ENCODE measurements at regions of chr12 and their contacts with region 1.

Region 1: GRCh38 chr12:69070319-69071090 is 137.5 kb upstream of the CPM start:
- DNase-seq: peak; percentile 71
- ATAC-seq: peak; percentile 78
- H3K4me3 ChIP-seq: no peak overlapping the region
- H3K4me3 Mint-ChIP-seq: no peak overlapping the region
- H3K27ac ChIP-seq: no peak overlapping the region
- H3K27ac Mint-ChIP-seq: no peak overlapping the region
- H3K4me1 ChIP-seq: no peaks in the 10 kb centered on the region
- H3K4me1 Mint-ChIP-seq: no peaks in the 10 kb centered on the region
- H3K27me3 ChIP-seq: peaks cover 0 to 3% (median 0%) of the 10 kb centered on the region in 4 experiments
- H3K27me3 Mint-ChIP-seq: peaks cover 23% of the 10 kb centered on the region
- CTCF ChIP-seq: peak; percentile 87

Region 2: DNA sequence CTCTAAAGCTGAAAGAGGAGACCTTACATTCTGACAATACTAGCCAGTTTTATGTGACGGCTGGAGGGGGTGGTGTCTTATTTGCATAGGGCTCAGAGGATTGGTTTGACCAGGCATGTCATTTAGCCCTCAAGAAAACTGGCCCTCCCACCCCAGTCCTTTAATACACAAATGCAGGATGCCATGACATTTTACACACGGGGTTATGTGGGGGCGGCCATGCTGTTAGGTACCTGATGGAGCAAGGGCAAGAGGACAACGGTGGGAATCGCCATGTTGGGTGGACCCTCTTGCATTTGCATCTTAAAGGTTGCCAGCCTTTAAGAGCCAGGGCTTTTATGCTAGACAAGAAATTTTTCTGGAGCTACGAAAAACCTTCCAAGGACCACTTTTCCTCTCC is 239.2 kb before region 1 on chr12:
- CTCF ChIA-PET with region 1: interaction called, 23 read pairs
- POLR2A ChIA-PET with region 1: no interaction called
- intact Hi-C with region 1: loop called (anchors 1 kb)
- DNase-seq: no peak
- ATAC-seq: no peak
- H3K4me3 ChIP-seq: no peak overlapping the region
- H3K4me3 Mint-ChIP-seq: no peak overlapping the region
- H3K27ac ChIP-seq: no peak overlapping the region
- H3K27ac Mint-ChIP-seq: no peak overlapping the region
- H3K4me1 ChIP-seq: no peaks in the 10 kb centered on the region
- H3K4me1 Mint-ChIP-seq: peaks cover 5% of the 10 kb centered on the region
- H3K27me3 ChIP-seq: no peaks in the 10 kb centered on the region
- H3K27me3 Mint-ChIP-seq: no peaks in the 10 kb centered on the region
- CTCF ChIP-seq: no peak

Region 3: GRCh38 chr12:68863109-68863770 is 207.3 kb before region 1 on chr12:
- CTCF ChIA-PET with region 1: interaction called, 61 read pairs
- POLR2A ChIA-PET with region 1: no interaction called
- intact Hi-C with region 1: loop called (anchors 1 kb)
- DNase-seq: peak; percentile 8
- ATAC-seq: no peak
- H3K4me3 ChIP-seq: no peak overlapping the region
- H3K4me3 Mint-ChIP-seq: no peak overlapping the region
- H3K27ac ChIP-seq: no peak overlapping the region
- H3K27ac Mint-ChIP-seq: no peak overlapping the region
- H3K4me1 ChIP-seq: peaks cover 0 to 6% of the 10 kb centered on the region in 2 donors
- H3K4me1 Mint-ChIP-seq: peaks cover 14% of the 10 kb centered on the region
- H3K27me3 ChIP-seq: no peaks in the 10 kb centered on the region
- H3K27me3 Mint-ChIP-seq: no peaks in the 10 kb centered on the region
- CTCF ChIP-seq: no peak

Region 4: DNA sequence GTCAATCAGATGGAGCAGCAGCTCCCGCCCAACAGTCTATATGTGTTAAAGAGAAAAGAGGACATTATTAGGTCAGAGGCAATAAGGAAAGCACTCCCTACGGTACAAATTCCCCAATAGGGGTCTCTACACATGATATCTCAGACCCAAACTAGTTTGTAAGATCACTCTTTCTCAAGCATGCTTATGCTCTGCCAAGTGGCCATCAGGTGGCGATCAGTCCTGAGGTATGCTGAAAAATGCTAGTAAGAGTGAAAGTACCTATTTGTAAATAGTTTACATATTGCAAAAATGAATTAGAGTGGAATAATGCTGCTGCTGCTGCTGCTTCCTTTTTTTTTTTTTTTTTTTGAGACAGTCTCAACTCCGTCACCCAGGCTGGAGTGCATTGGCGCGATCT is 198.6 kb before region 1 on chr12:
- CTCF ChIA-PET with region 1: interaction called, 61 read pairs
- POLR2A ChIA-PET with region 1: no interaction called
- intact Hi-C with region 1: no loop called
- DNase-seq: peak; percentile 41
- ATAC-seq: peak; percentile 51
- H3K4me3 ChIP-seq: no peak overlapping the region
- H3K4me3 Mint-ChIP-seq: no peak overlapping the region
- H3K27ac ChIP-seq: no peak overlapping the region
- H3K27ac Mint-ChIP-seq: no peak overlapping the region
- H3K4me1 ChIP-seq: no peaks in the 10 kb centered on the region
- H3K4me1 Mint-ChIP-seq: peaks cover 9% of the 10 kb centered on the region
- H3K27me3 ChIP-seq: no peaks in the 10 kb centered on the region
- H3K27me3 Mint-ChIP-seq: no peaks in the 10 kb centered on the region
- CTCF ChIP-seq: peak; percentile 28

Region 5: DNA sequence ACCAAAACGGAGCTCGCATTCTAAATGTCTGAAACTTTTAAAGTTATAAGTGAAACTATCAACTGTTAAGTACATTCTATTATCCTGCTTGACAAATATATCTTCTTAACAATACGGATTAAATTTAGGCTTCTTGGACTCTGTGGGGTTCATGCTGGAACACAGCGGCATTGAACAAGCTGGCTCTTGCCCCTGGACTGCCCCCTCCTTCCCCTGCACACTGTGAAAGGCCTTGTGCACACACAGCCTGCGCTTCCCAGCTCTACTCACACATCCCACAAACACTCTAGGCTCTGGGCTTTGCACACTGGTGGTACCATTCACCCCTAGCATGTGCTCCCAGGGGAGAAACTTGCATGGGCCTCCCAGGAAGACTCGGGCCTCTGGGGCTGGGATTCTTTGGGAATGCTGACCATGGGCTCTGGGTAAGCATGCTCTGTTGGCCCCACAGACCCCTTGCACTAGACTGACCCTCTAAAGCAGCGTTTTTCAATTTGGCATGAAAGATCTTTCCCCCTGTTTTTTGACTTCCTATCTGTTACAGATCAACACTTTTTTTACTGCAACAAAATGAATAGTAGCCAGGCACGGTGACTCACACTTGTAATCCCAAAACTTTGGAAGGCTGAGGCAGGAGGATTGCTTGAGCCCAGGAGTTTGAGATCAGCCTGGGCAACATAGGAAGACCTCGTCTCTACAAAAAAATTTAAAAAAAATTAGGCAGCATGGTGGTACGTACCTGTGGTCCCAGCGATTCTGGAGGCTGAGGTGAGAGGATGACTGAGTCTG is 41.4 kb before region 1 on chr12:
- CTCF ChIA-PET with region 1: no interaction called
- POLR2A ChIA-PET with region 1: no interaction called
- intact Hi-C with region 1: no loop called
- DNase-seq: no peak
- ATAC-seq: no peak
- H3K4me3 ChIP-seq: no peak overlapping the region
- H3K4me3 Mint-ChIP-seq: no peak overlapping the region
- H3K27ac ChIP-seq: no peak overlapping the region
- H3K27ac Mint-ChIP-seq: no peak overlapping the region
- H3K4me1 ChIP-seq: no peaks in the 10 kb centered on the region
- H3K4me1 Mint-ChIP-seq: no peaks in the 10 kb centered on the region
- H3K27me3 ChIP-seq: no peaks in the 10 kb centered on the region
- H3K27me3 Mint-ChIP-seq: peaks cover 5% of the 10 kb centered on the region
- CTCF ChIP-seq: no peak

Measured in B cell (primary cell).